ENCODE measurements at regions of chr7 and their contacts with region 1.

Region 1: DNA sequence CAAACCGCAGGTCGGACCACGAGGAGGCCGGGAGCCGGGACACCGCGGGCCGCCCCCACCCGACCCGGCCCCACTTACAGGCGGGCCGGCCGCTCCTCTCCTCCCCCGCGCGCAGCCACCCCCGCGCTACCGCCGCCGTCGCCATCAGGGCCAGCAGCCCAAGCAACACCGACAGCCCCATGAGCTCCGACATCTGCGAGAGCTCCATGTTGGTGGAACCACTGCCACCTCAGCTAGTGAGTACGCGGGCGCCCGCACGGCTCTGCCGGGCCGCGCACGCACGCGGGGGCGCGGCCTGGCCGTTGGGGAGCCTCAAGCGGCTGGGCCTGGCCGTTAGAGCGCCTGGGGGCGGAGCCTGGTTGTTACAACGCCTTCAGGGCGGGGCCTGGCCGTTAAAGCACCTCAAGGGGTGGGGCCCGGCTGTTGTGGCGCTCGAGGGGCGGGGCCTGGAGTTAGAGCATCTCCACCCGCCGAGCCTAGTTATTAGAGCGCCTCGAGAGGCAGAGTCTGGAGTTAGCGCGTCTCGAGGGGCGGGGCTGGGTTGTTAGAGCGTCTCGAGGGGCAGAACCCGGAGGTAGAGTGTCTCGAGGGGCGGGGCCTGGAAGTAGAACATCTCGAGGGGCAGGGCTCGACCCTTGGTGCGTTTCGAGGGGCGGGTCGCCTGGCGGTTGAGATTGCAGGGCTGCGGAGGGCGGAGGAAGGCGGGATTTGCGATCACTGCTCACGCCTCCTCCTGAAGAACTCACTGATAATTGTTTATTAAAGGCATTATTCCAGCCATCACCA is at the start of gene TBL2:
- DNase-seq: peak; percentile 98 to 100
- H3K4me3 ChIP-seq: peak within 1 kb of the TSS; percentile 80 to 81
- H3K27ac ChIP-seq: peak within 1 kb of the TSS; percentile 87 to 90
- H3K4me1 ChIP-seq: peaks cover 0 to 12% of the 10 kb centered on the region in 2 donors
- H3K27me3 ChIP-seq: no peaks in the 10 kb centered on the region
- CTCF ChIP-seq: peak in 1 of 3 experiments; percentile 32
- total RNA-seq, gene TBL2: 52.9 TPM

Region 2: GRCh38 chr7:73522105-73522872 is 56.2 kb before region 1 on chr7 and contains the start of gene BAZ1B:
- intact Hi-C with region 1: loop called (anchors 1 kb)
- DNase-seq: peak; percentile 96 to 99
- H3K4me3 ChIP-seq: peak within 1 kb of the TSS; percentile 77 to 95
- H3K27ac ChIP-seq: peak within 1 kb of the TSS; percentile 84 to 86
- H3K4me1 ChIP-seq: peaks cover 5 to 27% of the 10 kb centered on the region in 2 donors
- H3K27me3 ChIP-seq: no peaks in the 10 kb centered on the region
- CTCF ChIP-seq: peak; percentile 9 to 32 (median 19)
- total RNA-seq, gene BAZ1B: 28.1 TPM

Region 3: GRCh38 chr7:73623798-73624668 is 45.5 kb after region 1 on chr7 and contains the start of gene MLXIPL:
- intact Hi-C with region 1: no loop called
- DNase-seq: peak in 1 of 2 donors; percentile 76
- H3K4me3 ChIP-seq: peak within 1 kb of the TSS; percentile 46 to 64
- H3K27ac ChIP-seq: no peak within 1 kb of the TSS
- H3K4me1 ChIP-seq: peaks cover 7 to 15% of the 10 kb centered on the region in 2 donors
- H3K27me3 ChIP-seq: peaks cover 22% of the 10 kb centered on the region
- CTCF ChIP-seq: no peak
- total RNA-seq, gene MLXIPL: 297 TPM